IMR-90 (cell line): ENCODE measurements at regions of chr11 and their contacts with region 1.

Region 1: GRCh38 chr11:9250139-9250582 is 15.0 kb downstream of the DENND5A start:
- DNase-seq: no peak
- ATAC-seq: no peak
- H3K4me3 ChIP-seq: no peak overlapping the region
- H3K27ac ChIP-seq: no peak overlapping the region
- H3K4me1 ChIP-seq: 0 out of 2 replicates have a peak, but pooled peaks cover 1% of the 10 kb centered on the region
- H3K27me3 ChIP-seq: no peaks in the 10 kb centered on the region
- CTCF ChIP-seq: no peak
- POLR2A ChIP-seq: no peak
- RAD21 ChIP-seq: no peak

Region 2: GRCh38 chr11:8807544-8808225 is 442.5 kb before region 1 on chr11:
- CTCF ChIA-PET with region 1: no interaction called
- POLR2A ChIA-PET with region 1: no interaction called
- dilution Hi-C with region 1: no loop called
- in situ Hi-C with region 1: no loop called
- intact Hi-C with region 1: no loop called
- DNase-seq: peak; percentile 93
- ATAC-seq: peak; percentile 52
- H3K4me3 ChIP-seq: no peak overlapping the region; the same call in 1 of the 2 replicates
- H3K27ac ChIP-seq: peak overlapping the region; percentile 90
- H3K4me1 ChIP-seq: peaks cover 37% of the 10 kb centered on the region
- H3K27me3 ChIP-seq: no peaks in the 10 kb centered on the region
- CTCF ChIP-seq: no peak
- POLR2A ChIP-seq: no peak
- RAD21 ChIP-seq: peak; percentile 17; the same call in 1 of the 2 replicates

Region 3: DNA sequence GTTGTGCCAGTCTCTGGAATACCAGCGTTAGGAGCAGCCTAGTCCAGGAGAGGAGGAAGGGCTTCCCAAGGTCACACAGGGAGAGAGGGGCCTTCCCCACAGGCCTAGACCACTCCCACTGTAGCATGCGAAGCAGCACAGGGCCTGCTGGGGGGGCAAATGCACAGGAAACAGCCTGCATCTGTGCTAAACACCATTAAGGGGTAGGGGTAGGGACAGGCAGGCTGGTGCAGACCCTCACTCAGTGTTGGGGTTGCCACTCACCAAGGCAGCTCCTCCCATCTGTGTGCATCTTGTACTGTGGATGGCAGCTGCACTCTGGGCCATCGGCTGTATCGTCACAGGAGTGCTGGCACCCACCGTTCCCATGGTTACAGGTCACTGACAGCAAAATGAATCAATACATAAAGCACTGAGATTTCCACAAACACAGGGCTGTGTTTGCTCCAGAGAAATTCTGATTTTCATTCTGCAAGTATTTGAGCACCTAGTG is 183.7 kb before region 1 on chr11:
- CTCF ChIA-PET with region 1: no interaction called
- POLR2A ChIA-PET with region 1: no interaction called
- dilution Hi-C with region 1: no loop called
- in situ Hi-C with region 1: no loop called
- intact Hi-C with region 1: no loop called
- DNase-seq: no peak
- ATAC-seq: no peak
- H3K4me3 ChIP-seq: no peak overlapping the region
- H3K27ac ChIP-seq: no peak overlapping the region
- H3K4me1 ChIP-seq: peaks cover 3% of the 10 kb centered on the region; the same call in 1 of the 2 replicates
- H3K27me3 ChIP-seq: no peaks in the 10 kb centered on the region
- CTCF ChIP-seq: no peak
- POLR2A ChIP-seq: no peak
- RAD21 ChIP-seq: no peak

Region 4: DNA sequence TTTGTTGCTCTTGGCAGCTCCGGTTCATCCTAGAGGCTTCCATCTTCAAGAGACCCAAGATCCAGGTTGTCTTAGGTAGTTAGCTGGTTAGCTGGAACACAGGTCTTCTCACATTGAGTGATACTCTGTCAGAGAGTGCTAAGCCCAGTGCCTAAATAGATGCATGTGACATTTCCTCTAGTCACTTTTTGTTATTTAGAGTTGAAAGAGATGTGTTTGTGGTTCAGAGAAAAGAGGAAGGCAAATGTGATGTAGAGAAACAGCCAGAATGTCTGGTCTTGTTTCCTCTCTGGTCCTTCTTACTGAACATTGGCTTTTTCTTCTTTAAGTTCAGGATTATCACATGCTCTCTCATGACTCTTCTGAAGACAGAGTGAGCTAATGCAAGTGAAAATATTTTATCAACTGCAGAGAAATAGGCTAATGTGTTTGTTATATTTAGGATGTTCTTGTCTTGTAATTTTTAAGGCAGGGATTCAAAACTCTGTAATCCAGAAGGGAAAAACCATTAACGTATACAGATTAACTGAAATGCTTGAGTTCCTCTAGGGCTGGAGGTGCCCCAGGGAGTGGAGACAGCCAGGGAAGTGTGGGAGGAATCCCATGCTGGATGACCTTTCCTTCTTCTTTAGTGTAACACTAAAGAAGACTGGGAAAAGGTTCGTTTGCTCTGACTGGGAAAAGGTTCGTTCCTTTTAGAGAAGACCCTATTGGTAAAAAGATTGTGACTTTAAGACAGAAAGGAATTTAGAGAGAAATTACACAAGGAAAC is 489.1 kb after region 1 on chr11:
- CTCF ChIA-PET with region 1: interaction called, 11 read pairs
- POLR2A ChIA-PET with region 1: no interaction called
- dilution Hi-C with region 1: no loop called
- in situ Hi-C with region 1: no loop called
- intact Hi-C with region 1: no loop called
- DNase-seq: no peak
- ATAC-seq: no peak
- H3K4me3 ChIP-seq: no peak overlapping the region
- H3K27ac ChIP-seq: no peak overlapping the region
- H3K4me1 ChIP-seq: no peaks in the 10 kb centered on the region; the same call in 1 of the 2 replicates
- H3K27me3 ChIP-seq: no peaks in the 10 kb centered on the region
- CTCF ChIP-seq: no peak
- POLR2A ChIP-seq: no peak
- RAD21 ChIP-seq: no peak